ENCODE measurements at regions of chr2 and their contacts with region 1.

Region 1: GRCh38 chr2:9594366-9595054 is 36.3 kb downstream of the YWHAQ start:
- DNase-seq: peak; percentile 21
- ATAC-seq: peak; percentile 89
- H3K4me3 Mint-ChIP-seq: no peak overlapping the region
- H3K27ac Mint-ChIP-seq: peak overlapping the region; percentile 82
- H3K4me1 Mint-ChIP-seq: peaks cover 83% of the 10 kb centered on the region
- H3K27me3 Mint-ChIP-seq: no peaks in the 10 kb centered on the region

Region 2: GRCh38 chr2:9234680-9235387 is 359.7 kb before region 1 on chr2:
- CTCF ChIA-PET with region 1: no interaction called
- POLR2A ChIA-PET with region 1: no interaction called
- intact Hi-C with region 1: no loop called
- DNase-seq: no peak
- ATAC-seq: no peak
- H3K4me3 Mint-ChIP-seq: no peak overlapping the region
- H3K27ac Mint-ChIP-seq: no peak overlapping the region
- H3K4me1 Mint-ChIP-seq: no peaks in the 10 kb centered on the region
- H3K27me3 Mint-ChIP-seq: peaks cover 15% of the 10 kb centered on the region

Region 3: DNA sequence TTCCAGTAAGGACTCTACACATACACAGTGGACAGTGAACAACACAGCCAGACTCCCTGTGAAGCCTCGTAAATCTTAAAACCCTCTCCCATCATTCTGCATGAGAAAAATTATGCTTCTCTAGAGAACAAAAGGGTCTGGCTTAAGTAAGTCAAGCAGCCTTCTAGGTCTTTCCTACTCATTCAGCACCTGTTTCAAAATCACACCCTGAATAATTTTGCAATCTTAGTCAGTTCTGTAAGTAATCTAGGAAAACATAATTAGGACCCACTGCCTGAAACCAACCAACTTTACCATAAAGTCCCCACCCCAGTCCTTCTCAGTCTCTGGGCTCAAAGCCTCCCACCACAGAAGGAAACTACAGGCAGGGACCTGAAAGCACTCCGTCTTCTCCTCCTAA is 100.4 kb before region 1 on chr2:
- CTCF ChIA-PET with region 1: no interaction called
- POLR2A ChIA-PET with region 1: no interaction called
- intact Hi-C with region 1: loop called in 1 of 2 experiments (anchors 5 kb)
- DNase-seq: no peak
- ATAC-seq: peak; percentile 51
- H3K4me3 Mint-ChIP-seq: no peak overlapping the region
- H3K27ac Mint-ChIP-seq: peak overlapping the region; percentile 77
- H3K4me1 Mint-ChIP-seq: peaks cover 40% of the 10 kb centered on the region
- H3K27me3 Mint-ChIP-seq: no peaks in the 10 kb centered on the region

Region 4: DNA sequence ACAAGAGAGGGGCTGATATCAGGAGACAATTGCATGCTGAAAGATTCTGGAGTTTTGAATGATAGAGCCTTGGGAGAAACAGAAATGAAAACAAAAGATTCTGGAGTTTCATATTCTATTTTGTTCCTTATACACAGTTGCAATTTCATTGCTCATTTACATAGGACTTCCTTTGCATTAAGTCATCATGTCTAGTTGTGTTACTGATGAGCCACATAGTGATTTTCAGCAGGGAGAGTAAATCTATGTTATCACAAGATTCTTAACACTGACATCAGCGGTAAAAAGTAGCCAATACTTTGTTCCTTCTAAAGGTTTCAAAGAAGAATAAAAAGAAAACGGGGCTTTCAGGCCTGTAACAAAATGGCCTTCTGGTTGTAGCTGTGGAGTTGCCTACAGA is 46.0 kb before region 1 on chr2:
- CTCF ChIA-PET with region 1: interaction called, 3 read pairs
- POLR2A ChIA-PET with region 1: interaction called, 3 read pairs
- intact Hi-C with region 1: loop called in 1 of 2 experiments (anchors 1 kb)
- DNase-seq: no peak
- ATAC-seq: peak; percentile 71
- H3K4me3 Mint-ChIP-seq: peak overlapping the region; percentile 49
- H3K27ac Mint-ChIP-seq: peak overlapping the region; percentile 69
- H3K4me1 Mint-ChIP-seq: peaks cover 81% of the 10 kb centered on the region
- H3K27me3 Mint-ChIP-seq: no peaks in the 10 kb centered on the region

Region 5: GRCh38 chr2:9613291-9613690 is 18.8 kb after region 1 on chr2:
- CTCF ChIA-PET with region 1: interaction called, 31 read pairs
- POLR2A ChIA-PET with region 1: interaction called, 20 read pairs
- intact Hi-C with region 1: loop called (anchors 1 kb)
- DNase-seq: no peak
- ATAC-seq: no peak
- H3K4me3 Mint-ChIP-seq: no peak overlapping the region
- H3K27ac Mint-ChIP-seq: peak overlapping the region; percentile 27
- H3K4me1 Mint-ChIP-seq: peaks cover 95% of the 10 kb centered on the region
- H3K27me3 Mint-ChIP-seq: no peaks in the 10 kb centered on the region

Measured in activated CD4-positive, alpha-beta T cell treated with anti-CD3 and anti-CD28 coated beads for 36 hours (primary cell).